H1 (cell line): ENCODE measurements at regions of chr17 and their contacts with region 1.

Region 1: GRCh38 chr17:75205037-75205792 is at the start of gene NUP85:
- DNase-seq: peak; percentile 73 to 96
- H3K4me3 ChIP-seq: peak within 1 kb of the TSS; percentile 76 to 98 (median 92)
- H3K27ac ChIP-seq: peak within 1 kb of the TSS; percentile 99
- H3K4me1 ChIP-seq: peaks cover 0 to 2% (median 0%) of the 10 kb centered on the region in 4 experiments; a peak in 2 of 7 replicates
- H3K27me3 ChIP-seq: no peaks in the 10 kb centered on the region
- CTCF ChIP-seq: no peak
- EP300 ChIP-seq: no peak
- POLR2A ChIP-seq: peak in 1 of 2 experiments; percentile 79; a peak in 2 of 3 replicates
- RAD21 ChIP-seq: no peak
- total RNA-seq, gene NUP85: 97.4 and 98.5 TPM in 2 replicates

Region 2: GRCh38 chr17:75131280-75132017 is 73.8 kb before region 1 on chr17 and contains the start of gene NT5C:
- CTCF ChIA-PET with region 1: interaction called, 28 read pairs
- POLR2A ChIA-PET with region 1: interaction called, 9 read pairs
- DNase-seq: peak; percentile 58 to 91
- H3K4me3 ChIP-seq: peak within 1 kb of the TSS; percentile 69 to 95 (median 74)
- H3K27ac ChIP-seq: peak within 1 kb of the TSS; percentile 81
- H3K4me1 ChIP-seq: peaks cover 0 to 5% (median 4%) of the 10 kb centered on the region in 4 experiments; a peak in 5 of 7 replicates
- H3K27me3 ChIP-seq: no peaks in the 10 kb centered on the region
- CTCF ChIP-seq: peak; percentile 65 to 72 (median 68)
- EP300 ChIP-seq: no peak
- POLR2A ChIP-seq: peak; percentile 72 to 75; a peak in 2 of 3 replicates
- RAD21 ChIP-seq: peak; percentile 32 to 42; a peak in 2 of 4 replicates
- total RNA-seq, gene NT5C: 52.1 and 66.9 TPM in 2 replicates

Region 3: GRCh38 chr17:75147878-75148546 is 57.2 kb before region 1 on chr17:
- CTCF ChIA-PET with region 1: interaction called, 10 read pairs
- POLR2A ChIA-PET with region 1: interaction called, 4 read pairs
- DNase-seq: no peak
- H3K4me3 ChIP-seq: no peak overlapping the region
- H3K27ac ChIP-seq: no peak overlapping the region
- H3K4me1 ChIP-seq: peaks cover 0 to 2% (median 1%) of the 10 kb centered on the region in 4 experiments; a peak in 2 of 7 replicates
- H3K27me3 ChIP-seq: no peaks in the 10 kb centered on the region
- CTCF ChIP-seq: no peak
- EP300 ChIP-seq: no peak
- POLR2A ChIP-seq: no peak
- RAD21 ChIP-seq: no peak

Region 4: GRCh38 chr17:75182569-75183450 is 22.4 kb before region 1 on chr17 and contains the start of gene SUMO2:
- CTCF ChIA-PET with region 1: interaction called, 75 read pairs
- POLR2A ChIA-PET with region 1: interaction called, 11 read pairs
- DNase-seq: peak; percentile 93
- H3K4me3 ChIP-seq: peak within 1 kb of the TSS; percentile 97 to 99 (median 98)
- H3K27ac ChIP-seq: peak within 1 kb of the TSS; percentile 98
- H3K4me1 ChIP-seq: peaks cover 0 to 5% (median under 1%) of the 10 kb centered on the region in 4 experiments; a peak in 4 of 7 replicates
- H3K27me3 ChIP-seq: no peaks in the 10 kb centered on the region
- CTCF ChIP-seq: peak in 1 of 3 experiments; percentile 15; a peak in 1 of 4 replicates
- EP300 ChIP-seq: 0 out of 3 replicates have a peak, but pooled peaks of 1 of the 2 experiments have one; percentile 5
- POLR2A ChIP-seq: peak; percentile 44 to 89
- RAD21 ChIP-seq: no peak
- total RNA-seq, gene SUMO2: 779 and 788 TPM in 2 replicates

Region 5: GRCh38 chr17:75219815-75220214 is 14.6 kb after region 1 on chr17:
- CTCF ChIA-PET with region 1: interaction called, 6 read pairs
- POLR2A ChIA-PET with region 1: interaction called, 29 read pairs
- DNase-seq: no peak
- H3K4me3 ChIP-seq: no peak overlapping the region
- H3K27ac ChIP-seq: no peak overlapping the region
- H3K4me1 ChIP-seq: no peaks in the 10 kb centered on the region
- H3K27me3 ChIP-seq: no peaks in the 10 kb centered on the region
- CTCF ChIP-seq: no peak
- EP300 ChIP-seq: no peak
- POLR2A ChIP-seq: no peak
- RAD21 ChIP-seq: no peak

Region 6: DNA sequence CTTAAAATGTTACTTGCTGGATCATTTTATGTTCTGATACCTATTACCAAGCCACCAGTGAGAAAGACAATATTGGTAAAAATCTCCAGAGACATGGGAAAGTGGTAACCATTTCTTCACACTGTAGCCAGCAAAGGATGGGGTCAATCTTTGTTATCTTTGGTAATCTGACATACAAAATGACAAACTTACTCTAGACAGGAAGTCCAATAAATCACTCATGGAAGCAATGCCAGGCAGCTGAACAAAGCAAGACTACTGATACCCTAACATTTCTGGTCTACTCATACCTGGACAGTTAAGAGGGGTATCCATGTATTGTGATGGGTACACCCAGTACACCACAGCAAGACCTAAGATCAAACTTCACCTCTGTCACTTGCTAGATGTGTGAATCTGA is 181.2 kb after region 1 on chr17:
- CTCF ChIA-PET with region 1: no interaction called
- POLR2A ChIA-PET with region 1: no interaction called
- DNase-seq: no peak
- H3K4me3 ChIP-seq: no peak overlapping the region
- H3K27ac ChIP-seq: no peak overlapping the region
- H3K4me1 ChIP-seq: peaks cover 0 to 5% (median 0%) of the 10 kb centered on the region in 4 experiments; a peak in 1 of 7 replicates
- H3K27me3 ChIP-seq: no peaks in the 10 kb centered on the region
- CTCF ChIP-seq: no peak
- EP300 ChIP-seq: no peak
- POLR2A ChIP-seq: no peak
- RAD21 ChIP-seq: no peak